MCF 10A (cell line): ENCODE measurements at regions of chrX and their contacts with region 1.

Region 1: DNA sequence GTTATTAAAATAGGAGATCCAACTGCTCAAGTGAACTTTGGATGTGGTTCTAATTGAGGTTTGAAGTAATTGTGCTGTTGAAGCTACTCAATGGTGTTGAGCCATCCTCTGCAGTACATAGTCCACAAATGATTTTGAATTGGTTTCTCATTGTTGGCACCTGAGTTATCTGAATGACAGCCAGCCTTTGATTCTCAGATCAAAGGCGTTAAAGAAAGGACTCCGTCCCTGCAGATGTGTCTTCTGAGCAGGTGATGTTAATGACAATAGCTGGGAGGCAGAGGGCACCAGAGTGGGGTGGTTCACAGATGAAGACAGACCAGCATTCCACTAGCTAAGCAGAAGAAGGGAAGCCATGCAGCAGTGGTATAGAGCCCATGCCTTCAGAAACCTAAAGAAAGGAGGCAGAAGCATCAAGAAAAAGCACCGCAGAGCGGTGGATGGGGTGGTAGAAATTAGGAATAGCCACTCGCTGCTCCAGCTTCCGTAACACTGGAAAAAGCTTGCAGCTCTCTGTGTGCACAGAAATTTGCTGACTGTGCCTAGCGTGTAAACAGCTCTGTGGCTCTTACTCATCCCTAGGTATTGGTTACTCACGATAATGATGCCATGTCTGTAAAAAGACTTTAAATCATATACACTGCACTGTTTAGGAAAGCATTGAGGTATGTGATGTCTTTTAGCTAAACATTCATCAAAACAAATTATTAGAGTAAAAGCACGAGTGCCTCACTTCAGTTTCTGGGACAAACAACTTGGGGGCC is 79.2 kb upstream of the CLCN4 start:
- DNase-seq: peak; percentile 39
- H3K4me3 Mint-ChIP-seq: no peak overlapping the region
- H3K27ac Mint-ChIP-seq: no peak overlapping the region
- H3K4me1 Mint-ChIP-seq: no peaks in the 10 kb centered on the region
- H3K27me3 Mint-ChIP-seq: no peaks in the 10 kb centered on the region
- CTCF ChIP-seq: no peak

Region 2: GRCh38 chrX:9341291-9342201 is 736.1 kb before region 1 on chrX:
- CTCF ChIA-PET with region 1: no interaction called
- POLR2A ChIA-PET with region 1: no interaction called
- intact Hi-C with region 1: no loop called
- DNase-seq: peak; percentile 56
- H3K4me3 Mint-ChIP-seq: peak overlapping the region; percentile 43
- H3K27ac Mint-ChIP-seq: no peak overlapping the region
- H3K4me1 Mint-ChIP-seq: peaks cover 5% of the 10 kb centered on the region
- H3K27me3 Mint-ChIP-seq: no peaks in the 10 kb centered on the region
- CTCF ChIP-seq: no peak

Region 3: GRCh38 chrX:9865804-9866471 is 211.7 kb before region 1 on chrX:
- CTCF ChIA-PET with region 1: no interaction called
- POLR2A ChIA-PET with region 1: no interaction called
- intact Hi-C with region 1: no loop called
- DNase-seq: peak; percentile 79
- H3K4me3 Mint-ChIP-seq: no peak overlapping the region
- H3K27ac Mint-ChIP-seq: no peak overlapping the region
- H3K4me1 Mint-ChIP-seq: peaks cover 11% of the 10 kb centered on the region
- H3K27me3 Mint-ChIP-seq: no peaks in the 10 kb centered on the region
- CTCF ChIP-seq: no peak

Region 4: GRCh38 chrX:10039821-10040793 is 37.5 kb before region 1 on chrX:
- CTCF ChIA-PET with region 1: interaction called, 6 read pairs
- POLR2A ChIA-PET with region 1: no interaction called
- intact Hi-C with region 1: loop called (anchors 5 kb)
- DNase-seq: peak; percentile 61
- H3K4me3 Mint-ChIP-seq: no peak overlapping the region
- H3K27ac Mint-ChIP-seq: peak overlapping the region; percentile 62
- H3K4me1 Mint-ChIP-seq: peaks cover 9% of the 10 kb centered on the region
- H3K27me3 Mint-ChIP-seq: no peaks in the 10 kb centered on the region
- CTCF ChIP-seq: no peak

Region 5: DNA sequence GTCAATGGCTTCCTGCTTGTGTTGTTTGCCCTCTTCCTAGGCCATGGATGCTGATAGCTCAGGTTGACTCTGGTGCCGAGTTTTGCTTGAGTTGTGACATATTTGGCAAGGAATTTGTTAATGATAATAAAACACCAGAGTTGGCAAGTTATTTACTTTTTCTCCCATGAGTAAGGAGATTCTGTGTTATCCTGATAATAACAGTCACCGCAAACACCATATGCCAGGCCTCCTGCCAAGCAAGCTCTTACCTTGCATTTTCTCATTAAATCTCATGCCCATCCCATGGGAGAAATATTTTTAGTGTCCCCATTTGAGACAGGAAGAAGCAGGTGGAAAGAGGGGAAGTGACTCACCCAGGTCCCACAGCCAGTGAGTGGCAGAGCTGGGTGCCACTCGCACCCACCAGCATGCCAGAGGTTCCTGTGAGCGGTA is 11.8 kb after region 1 on chrX:
- CTCF ChIA-PET with region 1: interaction called, 4 read pairs
- POLR2A ChIA-PET with region 1: interaction called, 14 read pairs
- intact Hi-C with region 1: no loop called
- DNase-seq: peak; percentile 71
- H3K4me3 Mint-ChIP-seq: no peak overlapping the region
- H3K27ac Mint-ChIP-seq: peak overlapping the region; percentile 49
- H3K4me1 Mint-ChIP-seq: peaks cover 15% of the 10 kb centered on the region
- H3K27me3 Mint-ChIP-seq: no peaks in the 10 kb centered on the region
- CTCF ChIP-seq: no peak